ENCODE measurements at regions of chr17 and their contacts with region 1.

Region 1: DNA sequence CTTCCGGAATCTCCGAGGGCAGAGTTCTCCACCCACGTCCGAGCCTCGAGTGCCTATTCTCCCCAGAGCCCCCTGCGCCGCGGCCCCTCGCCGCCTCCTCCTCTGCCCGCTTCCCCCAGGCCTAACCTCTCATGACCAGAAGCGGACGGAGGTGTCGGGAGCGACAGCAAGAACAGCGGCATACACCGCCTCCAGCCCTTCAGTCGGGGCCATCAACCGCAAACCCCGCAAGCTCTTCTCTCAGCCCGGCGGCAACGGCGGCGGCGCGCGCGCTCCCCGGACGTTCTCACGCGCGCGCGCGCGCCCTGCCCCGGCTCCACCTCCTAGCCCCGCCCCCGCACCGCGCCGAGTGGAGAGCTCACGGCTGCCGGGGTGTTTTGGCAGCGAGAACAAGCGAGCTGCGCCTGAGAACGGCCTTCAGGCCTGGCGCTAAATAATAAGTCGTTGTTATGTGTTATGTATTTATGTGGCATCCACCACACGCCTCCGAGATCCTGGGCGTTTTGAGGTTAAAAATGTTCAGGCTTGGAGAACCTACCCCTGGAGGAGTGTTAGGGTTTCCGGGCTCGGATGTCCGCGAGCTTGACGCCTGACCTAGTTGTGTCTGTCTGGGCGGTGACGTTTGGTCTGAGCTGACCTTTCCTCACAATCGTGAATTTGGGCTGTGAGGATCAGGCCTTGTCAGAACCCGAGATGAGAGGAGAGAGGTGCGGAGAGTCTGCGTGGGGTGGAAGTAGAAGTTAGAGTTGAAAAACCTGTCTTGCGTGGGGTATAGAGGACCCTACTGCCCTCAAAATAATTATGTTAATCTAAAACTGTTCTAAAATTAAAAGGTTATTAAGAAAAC is at the start of gene RNFT1:
- DNase-seq: peak; percentile 97
- H3K4me3 Mint-ChIP-seq: peak within 1 kb of the TSS; percentile 82
- H3K27ac Mint-ChIP-seq: peak within 1 kb of the TSS; percentile 94
- H3K4me1 Mint-ChIP-seq: peaks cover 17% of the 10 kb centered on the region
- H3K27me3 Mint-ChIP-seq: peaks cover 2% of the 10 kb centered on the region
- total RNA-seq, gene RNFT1: 33.9 and 34.3 TPM in 2 replicates

Region 2: DNA sequence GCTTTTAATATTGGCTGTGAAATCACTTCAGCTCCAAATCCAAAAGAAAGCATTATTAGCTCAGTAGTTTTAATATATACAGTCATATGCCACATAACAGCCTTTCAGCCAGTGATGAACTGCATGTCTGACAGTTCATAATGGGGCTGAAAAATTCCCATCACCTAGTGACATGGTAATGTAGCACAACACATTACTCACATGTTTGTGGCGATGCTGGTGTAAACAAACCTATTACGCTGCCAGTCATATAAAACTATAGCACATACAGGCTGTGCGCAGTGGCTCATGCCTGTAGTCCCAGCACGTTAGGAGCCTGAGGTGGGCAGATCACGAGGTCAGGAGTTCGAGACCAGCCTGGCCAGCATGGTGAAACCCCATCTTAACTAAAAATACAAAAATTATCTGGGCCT is 164.2 kb before region 1 on chr17:
- intact Hi-C with region 1: no loop called
- DNase-seq: peak; percentile 61
- H3K4me3 Mint-ChIP-seq: no peak overlapping the region
- H3K27ac Mint-ChIP-seq: no peak overlapping the region
- H3K4me1 Mint-ChIP-seq: peaks cover 27% of the 10 kb centered on the region
- H3K27me3 Mint-ChIP-seq: no peaks in the 10 kb centered on the region

Region 3: GRCh38 chr17:59941131-59941530 is 23.6 kb before region 1 on chr17:
- intact Hi-C with region 1: loop called (anchors 1 kb)
- DNase-seq: no peak
- H3K4me3 Mint-ChIP-seq: peak overlapping the region; percentile 35
- H3K27ac Mint-ChIP-seq: peak overlapping the region; percentile 89
- H3K4me1 Mint-ChIP-seq: peaks cover 32% of the 10 kb centered on the region
- H3K27me3 Mint-ChIP-seq: no peaks in the 10 kb centered on the region

Region 4: DNA sequence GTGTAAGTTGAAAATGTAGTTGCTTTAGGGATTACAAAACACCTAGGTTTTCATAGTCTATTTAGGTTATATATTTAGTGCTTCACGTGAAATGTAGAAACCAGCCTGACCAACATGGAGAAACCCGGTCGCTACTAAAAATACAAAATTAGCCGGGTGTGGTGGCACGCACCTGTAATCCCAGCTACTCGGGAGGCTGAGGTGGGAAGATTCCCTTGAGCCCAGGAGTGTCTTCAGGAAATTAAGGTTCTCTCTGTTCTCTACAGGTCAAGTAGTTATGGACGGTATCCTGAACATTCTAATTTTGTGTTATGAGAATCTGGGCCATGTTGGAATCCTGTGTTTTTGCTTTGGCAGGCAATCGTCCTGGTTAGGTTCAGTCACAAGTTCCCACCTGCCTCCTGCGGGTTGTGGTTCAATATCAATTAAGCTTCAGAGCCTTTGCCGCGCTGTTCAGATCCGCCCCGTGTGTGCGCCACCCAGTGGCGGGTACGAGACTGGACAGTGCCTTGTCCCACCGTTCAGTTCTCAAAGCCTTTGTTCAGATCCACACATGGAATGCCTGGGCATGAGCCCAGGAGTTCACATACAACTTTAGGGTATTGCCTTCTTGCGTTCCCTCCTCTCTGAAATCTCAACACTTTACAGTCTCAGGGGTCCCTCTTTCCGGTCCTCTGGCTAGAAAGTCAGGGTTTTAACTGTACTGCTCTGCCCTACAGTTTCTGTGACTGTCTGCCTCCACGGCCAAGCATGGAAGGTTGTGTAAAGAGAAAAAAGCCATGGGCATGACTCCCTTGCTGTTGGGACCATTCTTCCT is 72.3 kb after region 1 on chr17:
- intact Hi-C with region 1: loop called (anchors 5 kb)
- DNase-seq: peak; percentile 92
- H3K4me3 Mint-ChIP-seq: peak overlapping the region; percentile 48
- H3K27ac Mint-ChIP-seq: peak overlapping the region; percentile 20
- H3K4me1 Mint-ChIP-seq: peaks cover 7% of the 10 kb centered on the region
- H3K27me3 Mint-ChIP-seq: peaks cover 18% of the 10 kb centered on the region

Measured in activated CD4-positive, alpha-beta T cell treated with anti-CD3 and anti-CD28 coated beads, Interleukin-2, amount 10 ng/mL, durations not matched to agents 24 days and 14 days (primary cell).